Heart left ventricle (tissue), 16 donors: ENCODE measurements at regions of chr1 and their contacts with region 1.

Region 1: GRCh38 chr1:155504207-155504606 is 58.4 kb downstream of the ASH1L start:
- DNase-seq: no peak
- ATAC-seq: peak in 2 of 4 donors; percentile 42 to 45
- H3K4me3 ChIP-seq: no peak overlapping the region
- H3K27ac ChIP-seq: no peak overlapping the region
- H3K4me1 ChIP-seq: peaks cover 0 to 37% (median 24%) of the 10 kb centered on the region in 12 donors
- H3K27me3 ChIP-seq: no peaks in the 10 kb centered on the region
- CTCF ChIP-seq: peak in 10 of 12 donors; percentile 27 to 50 (median 34)
- POLR2A ChIP-seq: no peak

Region 2: DNA sequence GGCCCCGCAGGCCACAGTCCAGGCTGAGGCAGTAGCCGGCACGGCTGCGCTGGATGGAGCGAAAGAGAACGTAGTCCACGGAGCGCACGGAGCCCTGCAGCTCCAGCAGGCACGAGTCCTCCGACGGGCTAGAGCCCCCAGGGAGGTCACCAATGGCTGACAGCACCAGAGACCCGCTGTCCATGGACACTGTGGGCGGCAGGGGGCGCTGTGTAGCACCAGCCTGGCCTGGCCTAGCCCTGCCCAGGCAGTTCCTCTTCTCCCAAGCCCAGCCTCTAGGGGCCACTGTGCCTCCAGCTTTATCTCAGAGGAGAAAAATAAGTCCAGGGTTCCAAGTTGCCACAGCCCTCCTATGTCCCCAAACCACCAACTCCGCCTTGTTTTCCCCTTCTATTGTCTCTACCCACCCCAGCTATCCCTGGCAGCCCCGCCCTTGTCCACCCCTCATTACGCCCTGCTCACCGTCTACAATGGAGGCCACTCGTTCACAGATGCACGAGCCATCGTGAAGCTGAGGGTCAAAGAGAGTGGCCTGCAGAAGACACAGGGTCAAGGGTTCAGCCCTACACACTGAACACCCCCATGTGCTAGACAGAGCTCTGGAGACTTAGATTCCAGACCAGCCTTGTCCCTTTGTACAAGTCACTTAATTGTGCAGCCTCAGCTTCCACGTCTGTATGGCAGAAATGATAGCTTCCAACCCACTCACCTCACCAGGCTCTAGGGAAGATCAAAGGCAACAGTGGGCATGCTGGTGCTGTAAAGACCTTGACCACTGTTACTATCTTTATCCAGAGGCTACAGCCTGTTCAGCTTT is 253.4 kb before region 1 on chr1:
- intact Hi-C with region 1: loop called in 2 of 10 experiments (anchors 10 kb)
- DNase-seq: peak; percentile 92 to 96 (median 93)
- ATAC-seq: peak; percentile 79 to 85 (median 84)
- H3K4me3 ChIP-seq: peak overlapping the region in 9 of 12 donors; percentile 17 to 60 (median 36)
- H3K27ac ChIP-seq: peak overlapping the region in 8 of 12 donors; percentile 29 to 57 (median 46)
- H3K4me1 ChIP-seq: peaks cover 7 to 38% (median 27%) of the 10 kb centered on the region in 12 donors
- H3K27me3 ChIP-seq: no peaks in the 10 kb centered on the region
- CTCF ChIP-seq: peak; percentile 99 to 100 (median 100)
- POLR2A ChIP-seq: no peak

Region 3: DNA sequence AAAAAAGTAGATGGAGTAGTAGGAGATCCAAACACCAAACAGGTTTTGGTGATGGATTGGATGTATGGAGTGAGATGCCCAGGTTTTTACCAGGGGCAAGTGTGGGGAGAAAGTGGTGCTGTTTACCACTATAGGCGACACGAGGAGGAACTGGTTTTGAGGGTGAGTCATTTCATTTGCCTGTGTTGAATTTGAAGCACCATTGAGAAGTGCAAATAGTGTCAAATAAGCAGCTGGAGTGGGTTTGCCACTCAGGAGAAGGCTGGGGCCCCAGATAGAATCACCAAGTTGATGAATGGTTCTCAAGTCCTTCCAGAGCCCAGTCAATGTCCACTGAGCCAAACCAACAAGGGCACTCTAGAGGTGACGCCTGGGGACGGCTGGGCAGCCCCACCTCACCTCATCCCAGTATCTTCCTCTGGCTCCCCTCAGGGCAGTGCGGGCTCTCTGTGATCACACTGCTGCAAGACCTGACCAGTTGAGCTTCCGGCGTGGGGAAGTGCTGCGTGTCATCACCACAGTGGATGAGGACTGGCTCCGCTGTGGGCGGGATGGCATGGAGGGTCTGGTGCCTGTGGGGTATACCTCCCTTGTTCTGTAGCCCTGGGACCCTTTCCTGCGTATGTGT is 174.1 kb before region 1 on chr1:
- intact Hi-C with region 1: loop called in 2 of 10 experiments (anchors 2 to 10 kb)
- DNase-seq: no peak
- ATAC-seq: no peak
- H3K4me3 ChIP-seq: no peak overlapping the region
- H3K27ac ChIP-seq: no peak overlapping the region
- H3K4me1 ChIP-seq: peaks cover 0 to 12% (median 5%) of the 10 kb centered on the region in 12 donors
- H3K27me3 ChIP-seq: no peaks in the 10 kb centered on the region
- CTCF ChIP-seq: no peak
- POLR2A ChIP-seq: no peak

Region 4: GRCh38 chr1:155463865-155464650 is 40.1 kb before region 1 on chr1:
- intact Hi-C with region 1: loop called in 1 of 10 experiments (anchors 5 kb)
- DNase-seq: no peak
- ATAC-seq: peak in 2 of 4 donors; percentile 16 to 65
- H3K4me3 ChIP-seq: no peak overlapping the region
- H3K27ac ChIP-seq: no peak overlapping the region
- H3K4me1 ChIP-seq: peaks cover 0 to 32% (median 13%) of the 10 kb centered on the region in 12 donors
- H3K27me3 ChIP-seq: no peaks in the 10 kb centered on the region
- CTCF ChIP-seq: no peak
- POLR2A ChIP-seq: no peak

Region 5: GRCh38 chr1:155562581-155563376 is 58.6 kb after region 1 on chr1 and contains the start of gene ASH1L:
- intact Hi-C with region 1: loop called in 1 of 10 experiments (anchors 5 kb)
- DNase-seq: peak; percentile 95 to 97 (median 96)
- ATAC-seq: peak; percentile 93 to 96 (median 95)
- H3K4me3 ChIP-seq: peak within 1 kb of the TSS; percentile 77 to 99 (median 92)
- H3K27ac ChIP-seq: peak within 1 kb of the TSS; percentile 94 to 100 (median 98)
- H3K4me1 ChIP-seq: peaks cover 4 to 50% (median 37%) of the 10 kb centered on the region in 12 donors
- H3K27me3 ChIP-seq: no peaks in the 10 kb centered on the region
- CTCF ChIP-seq: peak in 1 of 12 donors; percentile 25
- POLR2A ChIP-seq: peak; percentile 53 to 93
- total RNA-seq, gene ASH1L: 38.3 to 56.0 (median 50.3) TPM